ENCODE measurements at regions of chr15 and their contacts with region 1.

Region 1: DNA sequence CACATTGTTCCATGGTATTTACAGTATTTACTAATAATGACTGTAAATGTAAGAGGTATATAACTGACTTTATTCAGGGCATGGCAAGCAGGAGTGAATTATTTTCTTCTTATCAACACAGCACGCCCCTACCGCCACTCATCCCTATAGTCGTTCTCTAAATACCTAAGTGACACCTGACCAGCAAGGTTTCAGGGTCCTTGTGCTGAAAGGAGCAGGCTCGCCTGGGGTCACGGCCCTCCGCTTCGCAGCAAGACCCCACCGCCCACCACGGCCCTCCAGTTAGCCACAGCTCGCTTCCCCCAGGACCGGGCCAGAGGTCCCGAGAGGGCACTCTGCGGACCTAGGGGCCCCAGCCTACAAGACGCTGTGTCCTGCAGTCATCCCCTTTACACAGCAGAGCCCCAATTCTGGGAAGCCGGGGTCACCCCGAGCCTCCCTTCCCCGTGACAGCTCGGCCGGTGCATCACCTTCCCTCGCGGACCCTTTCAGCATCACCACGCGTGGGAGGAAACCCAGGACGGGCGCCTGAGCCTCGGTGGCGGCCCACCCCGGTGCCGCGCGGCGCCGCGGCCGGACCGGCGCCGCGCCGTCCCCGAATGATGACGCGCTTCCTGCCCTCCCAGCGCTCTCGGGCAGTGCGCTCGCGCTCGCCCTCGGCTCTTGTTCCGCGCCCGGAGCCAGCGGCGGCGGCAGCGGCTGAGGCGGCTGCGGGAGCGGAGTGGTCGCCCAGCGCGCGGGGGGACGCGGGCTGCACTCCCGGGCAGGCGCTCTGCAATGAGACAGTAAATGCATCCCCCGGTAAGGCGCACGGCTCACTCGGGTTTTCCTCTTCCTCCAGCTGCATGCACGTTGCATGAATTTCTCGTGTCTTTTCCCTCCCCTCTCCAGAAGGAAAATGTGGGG is 225.1 kb upstream of the C2CD4B start:
- DNase-seq: peak; percentile 72
- H3K4me3 ChIP-seq: peak within 1 kb of the TSS; percentile 95
- H3K27ac ChIP-seq: peak within 1 kb of the TSS; percentile 86
- H3K4me1 ChIP-seq: peaks cover 40% of the 10 kb centered on the region
- H3K27me3 ChIP-seq: no peaks in the 10 kb centered on the region
- CTCF ChIP-seq: no peak

Region 2: DNA sequence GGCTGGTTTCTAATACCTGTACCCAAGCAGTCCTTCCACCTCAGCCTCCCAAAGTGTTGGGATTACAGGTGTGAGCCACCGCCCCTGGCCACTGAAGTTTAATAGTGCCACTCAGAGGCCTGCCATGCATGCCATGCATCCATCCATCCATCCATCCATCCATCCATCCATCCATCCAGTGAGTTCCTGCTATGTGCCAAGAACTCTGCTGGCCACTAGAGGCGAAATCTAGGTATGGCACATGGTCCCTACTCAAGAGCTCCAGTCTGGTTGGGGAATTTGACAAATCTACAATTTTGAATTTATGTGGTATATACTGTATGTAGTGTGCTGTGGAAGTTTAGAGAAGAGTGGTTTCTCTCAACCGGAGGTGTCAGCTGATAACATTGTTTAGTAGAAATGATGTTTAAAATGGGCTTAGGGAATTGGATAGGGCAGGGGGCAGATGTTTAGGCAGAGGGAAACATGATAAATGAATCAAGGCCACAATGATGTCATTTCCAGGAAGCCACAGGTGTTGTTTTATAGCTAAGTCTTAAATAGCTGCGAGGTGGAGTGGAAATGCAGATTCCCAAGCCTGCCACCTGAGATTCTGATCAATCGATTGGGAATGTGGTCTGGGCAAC is 159.3 kb after region 1 on chr15:
- intact Hi-C with region 1: loop called (anchors 5 kb)
- DNase-seq: no peak
- H3K4me3 ChIP-seq: no peak overlapping the region
- H3K27ac ChIP-seq: no peak overlapping the region
- H3K4me1 ChIP-seq: peaks cover 53% of the 10 kb centered on the region
- H3K27me3 ChIP-seq: no peaks in the 10 kb centered on the region
- CTCF ChIP-seq: peak; percentile 56

Region 3: GRCh38 chr15:62649793-62650420 is 259.8 kb after region 1 on chr15:
- intact Hi-C with region 1: loop called (anchors 10 kb)
- DNase-seq: no peak
- H3K4me3 ChIP-seq: no peak overlapping the region
- H3K27ac ChIP-seq: peak overlapping the region; percentile 50
- H3K4me1 ChIP-seq: peaks cover 23% of the 10 kb centered on the region
- H3K27me3 ChIP-seq: no peaks in the 10 kb centered on the region
- CTCF ChIP-seq: no peak

Measured in left ventricle myocardium inferior (tissue), 1 donor.